ENCODE measurements at regions of chr22 and their contacts with region 1.

Region 1: DNA sequence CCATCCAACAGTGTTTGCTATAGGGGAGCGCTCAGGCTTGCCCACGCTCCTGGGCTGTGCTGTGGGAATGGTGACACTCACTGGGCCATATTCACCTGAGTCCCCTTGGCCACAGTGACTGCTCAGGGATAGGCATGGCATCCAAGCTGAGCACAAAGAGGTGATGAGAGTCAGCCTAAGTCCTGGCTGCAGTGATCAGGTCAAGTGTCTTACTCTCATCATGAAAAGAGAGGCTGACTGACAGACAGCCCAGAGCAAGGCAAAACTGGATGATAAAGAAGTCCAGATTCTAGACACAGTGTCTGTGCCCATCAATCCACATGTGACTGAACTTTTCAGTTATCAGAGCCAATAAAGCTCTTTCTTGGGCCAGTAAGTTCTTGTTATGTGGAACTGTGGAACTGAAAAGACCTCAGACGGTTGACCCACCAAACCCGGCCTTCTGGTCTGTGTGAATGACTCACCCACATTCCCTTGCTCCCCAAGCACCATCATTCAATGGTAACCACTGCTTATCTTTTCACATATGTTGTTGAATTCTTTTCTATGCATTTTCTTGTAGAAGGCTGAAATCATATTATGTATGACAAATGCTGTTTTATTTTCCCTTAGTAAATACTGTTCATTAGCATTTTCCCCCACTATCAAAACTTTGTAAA is 43.2 kb upstream of the YPEL1 start:
- DNase-seq: peak; percentile 84 to 90 (median 88)
- ATAC-seq: peak; percentile 61
- H3K4me3 ChIP-seq: no peak overlapping the region
- H3K27ac ChIP-seq: peak overlapping the region; percentile 7; the same call in 2 of the 3 replicates
- H3K4me1 ChIP-seq: peaks cover 0 to 12% of the 10 kb centered on the region in 2 experiments; a peak in 2 of 5 replicates
- H3K27me3 ChIP-seq: no peaks in the 10 kb centered on the region
- CTCF ChIP-seq: no peak
- EP300 ChIP-seq: peak; percentile 30; the same call in 1 of the 2 replicates
- POLR2A ChIP-seq: no peak
- RAD21 ChIP-seq: no peak

Region 2: GRCh38 chr22:21760640-21761039 is 18.2 kb before region 1 on chr22:
- CTCF ChIA-PET with region 1: no interaction called
- POLR2A ChIA-PET with region 1: interaction called, 69 read pairs
- in situ Hi-C with region 1: no loop called
- intact Hi-C with region 1: loop called (anchors 2 kb)
- DNase-seq: peak in 2 of 4 experiments; percentile 73 to 79
- ATAC-seq: peak; percentile 9; the same call in 1 of the 3 replicates
- H3K4me3 ChIP-seq: no peak overlapping the region
- H3K27ac ChIP-seq: no peak overlapping the region
- H3K4me1 ChIP-seq: peaks cover 17 to 21% of the 10 kb centered on the region in 2 experiments
- H3K27me3 ChIP-seq: no peaks in the 10 kb centered on the region
- CTCF ChIP-seq: no peak
- EP300 ChIP-seq: no peak
- POLR2A ChIP-seq: no peak
- RAD21 ChIP-seq: no peak

Region 3: GRCh38 chr22:21766691-21767462 is 12.0 kb before region 1 on chr22:
- CTCF ChIA-PET with region 1: no interaction called
- POLR2A ChIA-PET with region 1: interaction called, 69 read pairs
- in situ Hi-C with region 1: no loop called
- intact Hi-C with region 1: no loop called
- DNase-seq: peak in 1 of 4 experiments; percentile 31
- ATAC-seq: peak; percentile 12
- H3K4me3 ChIP-seq: no peak overlapping the region
- H3K27ac ChIP-seq: no peak overlapping the region
- H3K4me1 ChIP-seq: peaks cover 0 to 5% of the 10 kb centered on the region in 2 experiments; a peak in 1 of 5 replicates
- H3K27me3 ChIP-seq: no peaks in the 10 kb centered on the region
- CTCF ChIP-seq: no peak
- EP300 ChIP-seq: no peak
- POLR2A ChIP-seq: no peak
- RAD21 ChIP-seq: no peak

Region 4: GRCh38 chr22:21791635-21792625 is 13.1 kb after region 1 on chr22:
- CTCF ChIA-PET with region 1: no interaction called
- POLR2A ChIA-PET with region 1: interaction called, 36 read pairs
- in situ Hi-C with region 1: no loop called
- intact Hi-C with region 1: no loop called
- DNase-seq: peak; percentile 90 to 99 (median 95)
- ATAC-seq: peak; percentile 86
- H3K4me3 ChIP-seq: no peak overlapping the region
- H3K27ac ChIP-seq: peak overlapping the region; percentile 10; the same call in 2 of the 3 replicates
- H3K4me1 ChIP-seq: peaks cover 0 to 11% of the 10 kb centered on the region in 2 experiments; a peak in 3 of 5 replicates
- H3K27me3 ChIP-seq: no peaks in the 10 kb centered on the region
- CTCF ChIP-seq: peak in 1 of 3 experiments; percentile 83; a peak in 2 of 6 replicates
- EP300 ChIP-seq: peak; percentile 99
- POLR2A ChIP-seq: no peak
- RAD21 ChIP-seq: no peak

Measured in K562 (cell line).